Prostate gland (tissue), 2 donors: ENCODE measurements at regions of chr11 and their contacts with region 1.

Region 1: GRCh38 chr11:129695575-129696308 is 119.9 kb upstream of the TMEM45B start:
- DNase-seq: peak; percentile 56
- H3K4me3 ChIP-seq: no peak overlapping the region
- H3K27ac ChIP-seq: no peak overlapping the region
- H3K4me1 ChIP-seq: no peaks in the 10 kb centered on the region
- H3K27me3 ChIP-seq: no peaks in the 10 kb centered on the region
- CTCF ChIP-seq: peak in 3 of 4 experiments; percentile 65 to 78 (median 72)
- POLR2A ChIP-seq: no peak

Region 2: GRCh38 chr11:128336203-128336602 is 1359.5 kb before region 1 on chr11:
- intact Hi-C with region 1: loop called (anchors 10 kb)
- DNase-seq: no peak
- H3K4me3 ChIP-seq: no peak overlapping the region
- H3K27ac ChIP-seq: no peak overlapping the region
- H3K4me1 ChIP-seq: no peaks in the 10 kb centered on the region
- H3K27me3 ChIP-seq: no peaks in the 10 kb centered on the region
- CTCF ChIP-seq: no peak
- POLR2A ChIP-seq: no peak

Region 3: GRCh38 chr11:130087294-130087926 is 391.7 kb after region 1 on chr11:
- intact Hi-C with region 1: no loop called
- DNase-seq: no peak
- H3K4me3 ChIP-seq: no peak overlapping the region
- H3K27ac ChIP-seq: no peak overlapping the region
- H3K4me1 ChIP-seq: no peaks in the 10 kb centered on the region
- H3K27me3 ChIP-seq: no peaks in the 10 kb centered on the region
- CTCF ChIP-seq: no peak
- POLR2A ChIP-seq: no peak